HepG2 (cell line): ENCODE measurements at regions of chr17 and their contacts with region 1.

Region 1: GRCh38 chr17:50478391-50479381 is at the start of gene RSAD1:
- DNase-seq: peak; percentile 91
- ATAC-seq: peak; percentile 90
- H3K4me3 ChIP-seq: peak within 1 kb of the TSS; percentile 71 to 83 (median 82)
- H3K27ac ChIP-seq: peak within 1 kb of the TSS; percentile 80
- H3K4me1 ChIP-seq: peaks cover 52% of the 10 kb centered on the region
- H3K27me3 ChIP-seq: no peaks in the 10 kb centered on the region
- CTCF ChIP-seq: peak; percentile 83
- EP300 ChIP-seq: peak in 1 of 2 experiments; percentile 25; a peak in 3 of 4 replicates
- POLR2A ChIP-seq: peak; percentile 89 to 92
- RAD21 ChIP-seq: peak; percentile 100
- total RNA-seq, gene RSAD1: 16.0 and 22.7 TPM in 2 replicates

Region 2: DNA sequence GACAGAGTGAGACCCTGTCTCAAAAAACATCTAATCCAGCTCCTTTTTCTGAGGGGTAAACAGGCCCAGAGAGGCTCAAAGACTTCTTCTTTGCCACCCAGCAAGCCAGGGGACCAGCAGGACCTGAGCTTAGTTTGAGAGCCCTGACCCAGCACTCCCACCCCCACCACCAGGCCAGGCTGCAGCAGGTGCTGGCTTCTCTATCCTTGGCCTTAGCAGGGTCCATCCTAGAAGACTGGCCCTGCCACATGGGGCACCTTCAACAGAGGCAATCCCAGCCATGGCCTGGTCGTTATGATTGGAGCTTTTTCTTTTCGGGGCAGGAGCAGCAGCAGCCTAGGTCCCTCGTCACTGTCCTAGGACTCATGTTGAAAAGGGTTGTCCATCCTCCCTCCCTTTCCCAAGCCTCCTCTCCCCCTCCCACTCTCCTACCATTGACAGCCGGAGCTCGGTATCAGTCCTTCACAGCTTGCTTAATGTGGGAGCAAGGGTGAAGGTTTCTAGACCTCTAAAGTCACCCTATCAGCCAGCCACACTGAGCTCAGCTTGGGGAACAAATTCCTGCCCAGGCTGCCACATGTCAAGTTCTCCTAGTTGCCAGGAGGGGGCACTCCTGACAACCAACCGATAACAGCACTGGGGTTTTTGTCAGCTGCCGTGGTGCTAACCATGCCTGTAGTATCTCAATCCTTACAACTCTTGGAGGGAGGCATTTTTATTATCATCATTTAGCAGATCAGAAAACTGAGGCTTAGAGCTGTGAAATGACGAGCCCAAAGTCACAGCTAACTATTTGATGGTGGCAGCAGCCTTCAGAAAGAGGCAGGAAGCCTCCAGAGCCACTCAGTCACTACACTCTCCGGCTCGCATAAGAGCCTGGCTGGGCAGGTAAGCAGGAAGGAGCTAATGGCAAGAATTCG is 116.9 kb before region 1 on chr17:
- CTCF ChIA-PET with region 1: interaction called, 20 read pairs
- POLR2A ChIA-PET with region 1: interaction called, 8 read pairs
- in situ Hi-C with region 1: no loop called
- intact Hi-C with region 1: loop called (anchors 1 kb)
- DNase-seq: peak; percentile 75
- ATAC-seq: peak; percentile 70
- H3K4me3 ChIP-seq: no peak overlapping the region
- H3K27ac ChIP-seq: peak overlapping the region; percentile 24
- H3K4me1 ChIP-seq: peaks cover 44% of the 10 kb centered on the region
- H3K27me3 ChIP-seq: no peaks in the 10 kb centered on the region
- CTCF ChIP-seq: peak; percentile 90
- EP300 ChIP-seq: no peak
- POLR2A ChIP-seq: peak; percentile 13 to 44; a peak in 1 of 4 replicates
- RAD21 ChIP-seq: peak; percentile 76

Region 3: GRCh38 chr17:50425682-50426471 is 52.8 kb before region 1 on chr17 and contains the start of gene ACSF2:
- CTCF ChIA-PET with region 1: interaction called, 20 read pairs
- POLR2A ChIA-PET with region 1: interaction called, 14 read pairs
- in situ Hi-C with region 1: no loop called
- intact Hi-C with region 1: loop called (anchors 1 kb)
- DNase-seq: peak; percentile 54
- ATAC-seq: peak; percentile 67
- H3K4me3 ChIP-seq: peak within 1 kb of the TSS; percentile 74 to 91 (median 90)
- H3K27ac ChIP-seq: peak within 1 kb of the TSS; percentile 83
- H3K4me1 ChIP-seq: peaks cover 92% of the 10 kb centered on the region
- H3K27me3 ChIP-seq: no peaks in the 10 kb centered on the region; a peak in 1 of 5 replicates
- CTCF ChIP-seq: peak; percentile 38
- EP300 ChIP-seq: 0 out of 4 replicates have a peak, but pooled peaks of 1 of the 2 experiments have one; percentile 13
- POLR2A ChIP-seq: peak; percentile 51 to 89; a peak in 3 of 4 replicates
- RAD21 ChIP-seq: no peak
- total RNA-seq, gene ACSF2: 32.0 and 87.3 TPM in 2 replicates

Region 4: DNA sequence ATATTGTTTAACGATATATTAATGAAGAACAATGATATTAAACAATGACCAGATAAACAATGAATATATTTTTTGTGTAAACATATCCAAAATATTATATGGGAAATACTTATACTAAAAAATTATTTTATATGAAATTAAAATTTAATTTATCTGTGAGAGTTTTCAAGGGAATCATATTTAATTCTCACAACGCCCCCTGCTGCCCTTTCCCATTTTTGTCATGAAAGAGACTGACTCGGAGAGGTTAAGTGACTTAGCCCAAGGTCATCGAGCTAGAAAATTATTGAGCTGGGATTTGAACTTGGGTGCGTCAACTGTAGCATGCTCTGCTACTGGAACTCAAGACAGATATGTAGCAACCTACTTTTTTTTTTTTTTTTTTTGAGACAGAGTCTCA is 22.4 kb after region 1 on chr17:
- CTCF ChIA-PET with region 1: interaction called, 9 read pairs
- POLR2A ChIA-PET with region 1: no interaction called
- in situ Hi-C with region 1: no loop called
- intact Hi-C with region 1: loop called (anchors 1 kb)
- DNase-seq: peak; percentile 73
- ATAC-seq: no peak
- H3K4me3 ChIP-seq: no peak overlapping the region
- H3K27ac ChIP-seq: no peak overlapping the region
- H3K4me1 ChIP-seq: peaks cover 42% of the 10 kb centered on the region
- H3K27me3 ChIP-seq: no peaks in the 10 kb centered on the region; a peak in 4 of 5 replicates
- CTCF ChIP-seq: peak; percentile 48
- EP300 ChIP-seq: no peak
- POLR2A ChIP-seq: no peak
- RAD21 ChIP-seq: no peak

Region 5: GRCh38 chr17:50547035-50547735 is 68.5 kb after region 1 on chr17 and contains the start of gene SPATA20:
- CTCF ChIA-PET with region 1: interaction called, 4 read pairs
- POLR2A ChIA-PET with region 1: interaction called, 16 read pairs
- in situ Hi-C with region 1: no loop called
- intact Hi-C with region 1: loop called (anchors 1 kb)
- DNase-seq: peak; percentile 88
- ATAC-seq: peak; percentile 76
- H3K4me3 ChIP-seq: peak within 1 kb of the TSS; percentile 63 to 87 (median 79)
- H3K27ac ChIP-seq: peak within 1 kb of the TSS; percentile 62
- H3K4me1 ChIP-seq: peaks cover 74% of the 10 kb centered on the region
- H3K27me3 ChIP-seq: no peaks in the 10 kb centered on the region; a peak in 1 of 5 replicates
- CTCF ChIP-seq: peak; percentile 99
- EP300 ChIP-seq: peak in 1 of 2 experiments; percentile 31; a peak in 1 of 4 replicates
- POLR2A ChIP-seq: peak; percentile 81 to 89
- RAD21 ChIP-seq: peak; percentile 100
- total RNA-seq, gene SPATA20: 35.7 and 64.8 TPM in 2 replicates

Region 6: DNA sequence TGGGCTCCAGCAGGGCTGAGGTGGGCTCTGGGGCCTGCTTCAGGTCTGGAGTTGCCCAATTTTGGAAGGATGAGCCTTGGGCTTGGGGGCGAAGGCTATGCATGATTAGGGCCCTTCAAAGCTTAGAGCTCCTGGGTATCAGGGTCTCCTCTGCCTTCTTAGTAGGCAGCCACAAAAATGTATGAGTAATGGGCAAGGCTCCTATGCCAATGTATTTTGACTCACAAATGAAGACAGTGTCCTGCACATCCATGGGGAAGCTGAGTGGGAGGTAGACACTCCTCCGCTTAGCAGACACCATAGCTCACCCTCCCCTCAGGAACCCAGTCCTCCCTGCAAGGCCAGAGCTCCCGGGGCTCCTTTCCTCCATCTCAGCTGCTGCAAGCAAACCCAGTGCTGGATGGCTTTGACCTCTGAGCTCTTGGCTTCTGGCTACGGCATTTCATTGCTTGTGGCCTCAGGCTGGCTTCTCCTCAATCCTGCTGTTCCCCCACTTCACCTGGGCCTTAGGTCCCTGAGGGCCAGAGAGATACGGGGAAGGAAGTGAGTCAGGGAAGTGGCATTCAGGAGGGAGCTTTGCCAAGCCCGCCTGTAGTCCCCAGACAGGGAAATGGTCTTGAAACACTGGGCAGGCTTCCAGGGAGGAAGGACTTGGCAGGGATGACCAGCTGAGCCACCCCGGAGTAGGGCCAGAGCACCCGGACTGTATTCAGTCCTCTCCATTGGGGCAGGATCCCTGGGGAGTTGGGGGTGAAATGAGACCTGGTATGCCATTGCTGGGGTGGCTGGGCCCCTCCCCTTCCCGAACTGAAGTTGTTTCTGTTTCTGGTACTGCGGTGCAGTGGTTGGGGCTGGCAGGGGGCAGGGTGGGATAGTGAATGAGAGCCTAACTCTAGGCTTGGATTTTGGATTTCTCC is 160.4 kb after region 1 on chr17:
- CTCF ChIA-PET with region 1: no interaction called
- POLR2A ChIA-PET with region 1: no interaction called
- in situ Hi-C with region 1: no loop called
- intact Hi-C with region 1: no loop called
- DNase-seq: peak; percentile 58
- ATAC-seq: peak; percentile 1; the same call in 2 of the 3 replicates
- H3K4me3 ChIP-seq: peak overlapping the region in 1 of 3 experiments; percentile 45; a peak in 2 of 6 replicates
- H3K27ac ChIP-seq: peak overlapping the region; percentile 56
- H3K4me1 ChIP-seq: peaks cover 95% of the 10 kb centered on the region
- H3K27me3 ChIP-seq: peaks cover 0 to 3% of the 10 kb centered on the region in 2 experiments; a peak in 2 of 5 replicates
- CTCF ChIP-seq: no peak
- EP300 ChIP-seq: no peak; a peak in 1 of 4 replicates
- POLR2A ChIP-seq: no peak
- RAD21 ChIP-seq: no peak

Region 7: DNA sequence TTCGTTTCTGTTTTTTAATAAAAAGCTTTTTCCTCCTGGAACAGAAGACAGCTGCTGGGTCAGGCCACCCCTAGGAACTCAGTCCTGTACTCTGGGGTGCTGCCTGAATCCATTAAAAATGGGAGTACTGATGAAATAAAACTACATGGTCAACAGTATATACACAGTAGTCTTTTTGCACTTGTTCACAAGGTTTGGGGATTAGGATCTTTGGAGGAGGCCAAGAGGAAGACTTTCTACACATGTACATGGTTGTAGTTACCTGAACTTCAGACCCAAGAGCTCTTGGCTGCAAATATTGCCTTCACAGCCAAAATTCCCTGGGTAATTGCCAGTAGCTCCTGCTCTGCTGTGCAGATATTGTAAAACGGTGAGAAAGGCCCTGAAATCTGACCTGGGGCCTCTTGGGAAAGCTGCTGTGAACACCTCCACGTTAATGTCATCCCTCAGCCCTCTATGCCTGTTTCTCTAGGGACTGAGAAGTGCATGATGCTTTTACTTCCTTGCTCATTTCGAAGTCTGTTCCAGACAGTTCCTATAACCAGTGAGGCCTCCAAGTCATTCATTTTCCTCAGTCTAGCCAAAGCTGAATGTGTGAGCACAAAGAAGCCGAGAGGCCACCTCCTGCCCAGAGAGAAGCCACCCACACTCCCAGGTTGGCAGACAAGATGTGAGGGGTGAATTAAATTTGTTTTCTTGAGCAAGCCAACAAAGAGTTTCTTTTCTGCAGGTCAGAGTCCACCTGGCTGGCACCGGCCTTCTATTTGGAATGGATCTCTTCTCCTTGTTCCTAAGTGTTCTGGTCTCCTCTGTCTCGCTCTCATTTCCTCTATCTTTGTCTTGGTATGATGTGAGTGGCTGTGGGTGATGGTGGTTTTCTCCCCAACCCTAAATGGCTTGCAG is 213.1 kb after region 1 on chr17:
- CTCF ChIA-PET with region 1: no interaction called
- POLR2A ChIA-PET with region 1: interaction called, 6 read pairs
- in situ Hi-C with region 1: loop called (anchors 5 kb)
- intact Hi-C with region 1: loop called (anchors 1 kb)
- DNase-seq: peak; percentile 85
- ATAC-seq: peak; percentile 7
- H3K4me3 ChIP-seq: peak overlapping the region in 1 of 3 experiments; percentile 42; a peak in 1 of 6 replicates
- H3K27ac ChIP-seq: peak overlapping the region; percentile 89
- H3K4me1 ChIP-seq: peaks cover 91% of the 10 kb centered on the region
- H3K27me3 ChIP-seq: no peaks in the 10 kb centered on the region
- CTCF ChIP-seq: no peak
- EP300 ChIP-seq: peak; percentile 27 to 71; a peak in 2 of 4 replicates
- POLR2A ChIP-seq: peak; percentile 10 to 29; a peak in 2 of 4 replicates
- RAD21 ChIP-seq: peak; percentile 9; the same call in 1 of the 2 replicates